ENCODE measurements at regions of chr3 and their contacts with region 1.

Region 1: DNA sequence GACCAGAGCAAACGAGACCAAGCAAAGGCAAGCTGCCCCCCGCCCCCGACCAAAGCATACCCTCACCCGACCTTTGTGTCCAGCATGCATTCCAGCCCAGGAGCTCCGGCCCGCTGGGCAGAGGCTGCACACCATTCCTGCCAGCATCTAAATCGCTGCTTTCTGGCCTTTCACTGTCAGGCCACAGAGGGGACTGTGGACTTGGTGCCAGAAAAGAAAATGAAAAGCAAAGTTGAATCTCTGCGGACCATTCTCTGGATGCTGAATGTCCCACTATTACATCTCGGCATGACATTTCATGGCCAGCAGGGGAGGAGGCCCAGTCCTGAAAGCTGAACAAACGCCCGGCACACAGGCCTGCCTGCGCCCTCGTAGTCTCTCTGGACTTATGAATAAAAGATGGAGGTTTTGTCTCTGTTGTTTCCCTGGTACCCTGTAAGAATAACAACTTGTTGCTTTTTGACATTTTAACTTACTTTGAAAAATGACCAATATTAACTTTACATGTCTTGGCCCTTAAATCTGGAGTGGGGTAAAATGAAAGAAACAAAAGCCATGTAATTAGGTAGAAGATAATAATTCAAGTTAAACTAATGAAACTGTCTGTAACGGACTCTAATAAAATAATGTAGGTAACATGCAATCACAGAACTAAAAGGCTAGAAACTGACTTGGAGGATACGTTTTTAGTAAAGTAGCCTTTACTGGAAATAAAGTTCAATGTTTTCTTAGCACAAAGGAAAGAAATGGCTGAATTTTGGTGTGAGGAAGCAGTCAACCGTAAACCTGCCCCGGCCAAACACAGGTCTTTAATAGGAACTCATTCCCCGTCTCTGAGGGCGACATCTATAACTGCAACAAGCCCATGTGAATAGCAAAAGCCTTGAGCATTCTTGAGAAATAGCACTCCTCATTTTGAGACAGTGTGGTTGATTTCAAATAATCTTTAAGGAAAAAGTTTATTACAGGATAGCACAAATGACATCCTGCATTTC is 12.7 kb downstream of the IL17RD start:
- DNase-seq: no peak
- H3K4me3 ChIP-seq: no peak overlapping the region
- H3K27ac ChIP-seq: no peak overlapping the region
- H3K4me1 ChIP-seq: no peaks in the 10 kb centered on the region
- H3K27me3 ChIP-seq: no peaks in the 10 kb centered on the region
- CTCF ChIP-seq: no peak

Region 2: DNA sequence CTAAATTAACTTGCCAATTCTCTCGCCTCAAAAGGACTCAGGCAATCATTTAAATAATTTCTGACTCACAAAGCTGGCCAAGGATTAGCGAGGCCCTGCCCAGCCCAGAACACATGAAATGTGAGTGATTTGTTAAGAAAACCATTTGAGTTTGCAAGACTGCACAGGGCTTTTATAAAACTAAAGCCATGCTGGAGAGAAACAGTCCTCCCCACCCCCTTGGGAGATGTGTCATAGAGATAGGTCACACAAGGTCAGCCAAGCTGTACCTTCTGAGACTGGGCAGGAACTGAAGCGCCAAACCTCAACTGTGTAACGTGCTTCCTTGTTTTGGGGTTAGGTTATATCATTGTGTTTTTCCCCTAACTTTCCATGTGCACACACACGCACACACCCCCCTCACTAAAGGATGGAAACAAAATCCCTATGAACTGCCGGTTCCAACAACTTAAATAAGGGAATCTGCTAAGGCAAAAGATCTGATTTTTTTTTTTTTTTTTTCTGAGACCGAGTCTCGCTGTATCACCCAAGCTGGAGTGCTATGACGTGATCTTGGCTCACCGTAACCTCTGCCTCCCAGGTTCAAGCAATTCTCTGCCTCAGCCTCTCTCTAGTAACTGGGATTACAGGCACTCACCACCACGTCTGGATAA is 83.9 kb before region 1 on chr3:
- CTCF ChIA-PET with region 1: no interaction called
- POLR2A ChIA-PET with region 1: interaction called, 11 read pairs
- intact Hi-C with region 1: no loop called
- DNase-seq: peak; percentile 78 to 97
- H3K4me3 ChIP-seq: peak overlapping the region; percentile 38; the same call in 1 of the 2 replicates
- H3K27ac ChIP-seq: peak overlapping the region; percentile 91
- H3K4me1 ChIP-seq: peaks cover 60% of the 10 kb centered on the region
- H3K27me3 ChIP-seq: no peaks in the 10 kb centered on the region
- CTCF ChIP-seq: no peak

Region 3: GRCh38 chr3:57112206-57112605 is 40.2 kb before region 1 on chr3:
- CTCF ChIA-PET with region 1: no interaction called
- POLR2A ChIA-PET with region 1: no interaction called
- intact Hi-C with region 1: no loop called
- DNase-seq: no peak
- H3K4me3 ChIP-seq: no peak overlapping the region
- H3K27ac ChIP-seq: no peak overlapping the region
- H3K4me1 ChIP-seq: no peaks in the 10 kb centered on the region
- H3K27me3 ChIP-seq: no peaks in the 10 kb centered on the region
- CTCF ChIP-seq: 0 out of 2 replicates have a peak, but pooled peaks have one; percentile 12

Region 4: GRCh38 chr3:57659806-57660439 is 507.5 kb after region 1 on chr3:
- CTCF ChIA-PET with region 1: no interaction called
- POLR2A ChIA-PET with region 1: no interaction called
- intact Hi-C with region 1: no loop called
- DNase-seq: no peak
- H3K4me3 ChIP-seq: no peak overlapping the region
- H3K27ac ChIP-seq: no peak overlapping the region
- H3K4me1 ChIP-seq: peaks cover 7% of the 10 kb centered on the region; the same call in 1 of the 2 replicates
- H3K27me3 ChIP-seq: no peaks in the 10 kb centered on the region
- CTCF ChIP-seq: no peak

Region 5: DNA sequence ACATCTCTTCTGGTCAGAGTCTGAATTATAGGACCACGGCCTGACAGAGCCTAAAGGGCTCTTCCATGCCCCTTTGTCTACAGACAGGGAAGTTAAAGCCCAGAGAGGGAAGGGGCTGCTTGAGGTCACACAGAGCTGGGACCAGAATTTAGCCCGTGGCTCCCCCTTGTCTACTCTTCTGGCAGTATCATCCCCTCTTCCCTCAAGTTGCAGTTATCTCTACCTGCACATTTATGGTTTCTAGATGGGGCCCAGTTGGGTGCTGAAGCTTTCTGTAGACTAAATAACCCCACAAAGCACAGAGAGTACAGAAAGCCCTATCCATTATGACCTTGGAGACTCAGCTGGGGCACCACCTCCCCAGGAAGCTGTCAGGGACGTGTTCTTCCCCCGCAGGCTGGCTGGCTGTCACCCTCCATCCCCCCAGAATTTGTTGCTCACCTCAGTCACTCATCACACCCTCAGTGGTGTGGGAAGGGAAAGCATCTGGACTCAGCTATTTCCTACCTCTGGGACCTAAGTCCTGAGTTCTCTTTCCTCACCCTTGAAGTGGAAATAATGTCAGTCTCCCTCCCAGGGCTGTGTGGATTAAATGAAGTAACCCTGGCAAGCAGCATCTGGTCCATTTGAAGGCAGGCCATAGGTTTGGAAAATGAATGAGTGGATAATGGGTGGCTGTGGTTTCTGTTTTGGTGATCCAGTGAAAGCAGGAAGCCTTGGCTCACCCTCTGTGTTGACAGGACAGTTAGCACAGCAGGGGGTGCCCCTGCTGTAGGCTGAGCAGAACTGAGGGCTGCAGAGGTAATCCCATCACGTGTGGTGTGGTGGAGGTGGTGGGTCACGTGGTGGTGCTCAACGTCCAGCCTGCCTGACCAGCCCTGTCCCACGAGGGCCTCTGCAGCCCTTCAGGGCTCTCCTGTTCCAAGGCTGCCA is 1368.2 kb after region 1 on chr3:
- CTCF ChIA-PET with region 1: no interaction called
- POLR2A ChIA-PET with region 1: no interaction called
- intact Hi-C with region 1: no loop called
- DNase-seq: no peak
- H3K4me3 ChIP-seq: no peak overlapping the region
- H3K27ac ChIP-seq: no peak overlapping the region
- H3K4me1 ChIP-seq: peaks cover 9% of the 10 kb centered on the region; the same call in 1 of the 2 replicates
- H3K27me3 ChIP-seq: no peaks in the 10 kb centered on the region
- CTCF ChIP-seq: no peak